Activated T-helper 1 cell treated with anti-CD3 and anti-CD28 coated beads, Interleukin-12 subunit alpha, Interleukin-12 subunit beta, Interleukin-2, Interleukin-4 antibody, amounts not matched to agents 30 ng/mL and 10 ng/mL and 1 ng/mL, durations not matched to agents 14 hours and 24 hours and 36 hours (primary cell): ENCODE measurements at regions of chr4 and their contacts with region 1.

Region 1: GRCh38 chr4:151760712-151761527 is at the start of gene GATB:
- DNase-seq: peak; percentile 88
- H3K4me3 Mint-ChIP-seq: peak within 1 kb of the TSS; percentile 98
- H3K27ac Mint-ChIP-seq: peak within 1 kb of the TSS; percentile 97
- H3K4me1 Mint-ChIP-seq: peaks cover 21% of the 10 kb centered on the region
- H3K27me3 Mint-ChIP-seq: peaks cover 6% of the 10 kb centered on the region
- total RNA-seq, gene GATB: 16.1 and 20.0 TPM in 2 replicates

Region 2: GRCh38 chr4:151408630-151409469 is 352.1 kb before region 1 on chr4 and contains the start of gene FHIP1A:
- intact Hi-C with region 1: loop called (anchors 1 kb)
- DNase-seq: peak; percentile 60
- H3K4me3 Mint-ChIP-seq: peak within 1 kb of the TSS; percentile 80
- H3K27ac Mint-ChIP-seq: peak within 1 kb of the TSS; percentile 21
- H3K4me1 Mint-ChIP-seq: peaks cover 23% of the 10 kb centered on the region
- H3K27me3 Mint-ChIP-seq: peaks cover 52% of the 10 kb centered on the region
- total RNA-seq, gene FHIP1A: not detected in 2 replicates

Region 3: DNA sequence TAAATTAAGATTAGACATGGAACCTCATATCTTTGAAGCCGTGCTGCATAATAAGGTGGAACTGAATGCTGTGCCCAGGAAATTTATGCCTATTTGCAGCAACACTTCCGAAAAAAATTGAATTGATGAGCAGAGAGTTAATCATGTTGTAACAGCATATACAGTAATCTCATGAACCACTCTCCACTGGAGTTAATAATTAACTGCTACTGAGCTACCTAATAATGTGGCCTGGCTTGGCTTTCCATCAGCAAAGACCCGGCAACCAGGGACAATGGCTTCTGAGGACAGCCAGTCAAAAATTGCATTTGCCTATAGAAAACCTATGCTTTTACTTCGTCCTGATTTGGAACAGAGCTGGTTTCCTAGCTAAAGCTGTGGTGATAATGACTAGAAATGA is 63.7 kb after region 1 on chr4:
- intact Hi-C with region 1: no loop called
- DNase-seq: no peak
- H3K4me3 Mint-ChIP-seq: no peak overlapping the region
- H3K27ac Mint-ChIP-seq: no peak overlapping the region
- H3K4me1 Mint-ChIP-seq: no peaks in the 10 kb centered on the region
- H3K27me3 Mint-ChIP-seq: peaks cover 11% of the 10 kb centered on the region

Region 4: GRCh38 chr4:151887031-151887815 is 126.3 kb after region 1 on chr4:
- intact Hi-C with region 1: loop called (anchors 1 kb)
- DNase-seq: no peak
- H3K4me3 Mint-ChIP-seq: no peak overlapping the region
- H3K27ac Mint-ChIP-seq: no peak overlapping the region
- H3K4me1 Mint-ChIP-seq: peaks cover 21% of the 10 kb centered on the region
- H3K27me3 Mint-ChIP-seq: peaks cover 9% of the 10 kb centered on the region

Region 5: DNA sequence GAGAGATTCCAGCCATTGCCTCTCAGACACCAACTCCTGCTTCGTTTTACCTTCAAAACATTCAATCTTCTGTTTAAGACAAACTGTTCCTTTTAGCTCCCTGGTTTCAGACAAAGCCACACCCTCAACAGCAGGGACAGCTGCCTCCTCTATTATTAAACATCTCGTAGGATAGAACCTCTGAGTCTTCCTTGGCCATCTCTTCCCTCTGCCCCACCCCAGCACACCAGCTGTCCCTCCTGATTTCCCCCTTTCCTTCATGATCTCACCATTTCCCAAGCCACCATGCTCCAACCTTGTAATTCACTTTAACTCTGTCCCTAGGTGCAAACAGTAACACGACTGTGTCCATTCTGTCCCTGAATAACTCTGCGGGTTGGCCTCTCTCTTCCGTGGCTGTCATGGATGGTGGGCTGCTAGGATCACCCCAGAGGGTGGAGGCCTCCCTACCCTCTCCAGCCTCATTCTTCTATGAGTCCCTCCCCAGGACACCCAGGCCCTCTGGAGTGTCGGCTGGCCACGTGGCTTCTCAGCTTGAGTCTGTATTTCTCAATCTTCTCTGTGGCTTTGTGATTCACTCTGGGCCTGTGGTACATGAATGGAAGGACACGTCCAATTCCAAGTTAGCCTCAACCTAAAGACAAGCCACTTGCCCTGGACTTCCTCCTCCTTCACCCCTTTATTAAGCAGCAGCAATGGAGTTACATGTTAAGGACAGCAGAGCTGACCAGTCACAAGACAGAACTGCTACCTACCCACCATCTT is 425.0 kb after region 1 on chr4:
- intact Hi-C with region 1: loop called (anchors 5 kb)
- DNase-seq: no peak
- H3K4me3 Mint-ChIP-seq: no peak overlapping the region
- H3K27ac Mint-ChIP-seq: no peak overlapping the region
- H3K4me1 Mint-ChIP-seq: peaks cover 34% of the 10 kb centered on the region
- H3K27me3 Mint-ChIP-seq: no peaks in the 10 kb centered on the region

Region 6: DNA sequence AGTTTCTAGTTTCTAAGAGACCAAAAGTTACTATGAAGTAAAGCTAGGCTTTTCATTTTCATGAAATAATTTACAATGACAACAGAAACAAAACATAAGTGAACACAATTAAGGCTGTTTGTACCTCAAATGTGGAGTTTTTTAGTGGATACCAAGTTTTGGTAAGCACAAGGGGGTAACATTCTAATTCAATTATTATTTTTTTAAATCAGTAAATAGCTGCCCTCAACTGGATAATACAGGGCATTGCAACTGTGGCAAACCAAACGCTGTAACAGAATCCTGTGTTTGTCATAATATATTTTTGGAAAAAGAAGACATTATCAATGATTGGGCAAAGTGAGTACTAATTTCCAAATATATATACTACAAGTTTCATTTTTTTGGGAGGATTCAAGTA is 624.6 kb after region 1 on chr4:
- intact Hi-C with region 1: loop called (anchors 5 kb)
- DNase-seq: no peak
- H3K4me3 Mint-ChIP-seq: no peak overlapping the region
- H3K27ac Mint-ChIP-seq: no peak overlapping the region
- H3K4me1 Mint-ChIP-seq: peaks cover 21% of the 10 kb centered on the region
- H3K27me3 Mint-ChIP-seq: no peaks in the 10 kb centered on the region